Gastrocnemius medialis (tissue), 4 donors: ENCODE measurements at regions of chr12 and their contacts with region 1.

Region 1: GRCh38 chr12:54279866-54280467 is at the start of gene CBX5:
- DNase-seq: peak; percentile 99
- ATAC-seq: peak; percentile 72 to 77
- H3K4me3 ChIP-seq: peak within 1 kb of the TSS; percentile 74 to 95 (median 81)
- H3K27ac ChIP-seq: peak within 1 kb of the TSS; percentile 93 to 98 (median 96)
- H3K4me1 ChIP-seq: peaks cover 51 to 53% of the 10 kb centered on the region in 2 donors
- H3K27me3 ChIP-seq: no peaks in the 10 kb centered on the region
- CTCF ChIP-seq: no peak
- POLR2A ChIP-seq: peak; percentile 13 to 38
- total RNA-seq, gene CBX5: 7.9 to 8.9 (median 8.1) TPM

Region 2: GRCh38 chr12:53984901-53985709 is 294.9 kb before region 1 on chr12 and contains the start of gene HOXC10:
- in situ Hi-C with region 1: no loop called
- intact Hi-C with region 1: loop called (anchors 5 kb)
- DNase-seq: peak; percentile 97
- ATAC-seq: peak; percentile 81 to 85
- H3K4me3 ChIP-seq: peak within 1 kb of the TSS; percentile 68 to 85 (median 82)
- H3K27ac ChIP-seq: peak within 1 kb of the TSS; percentile 94 to 100 (median 98)
- H3K4me1 ChIP-seq: peaks cover 32 to 41% of the 10 kb centered on the region in 2 donors
- H3K27me3 ChIP-seq: peaks cover 0 to 38% (median 0%) of the 10 kb centered on the region in 3 donors
- CTCF ChIP-seq: peak; percentile 64 to 92 (median 82)
- POLR2A ChIP-seq: peak; percentile 45 to 49
- total RNA-seq, gene HOXC10: 23.9 to 48.3 (median 40.3) TPM

Region 3: GRCh38 chr12:54214553-54215406 is 65.2 kb before region 1 on chr12:
- in situ Hi-C with region 1: no loop called
- intact Hi-C with region 1: loop called (anchors 5 kb)
- DNase-seq: peak; percentile 80 to 86
- ATAC-seq: peak; percentile 89 to 94
- H3K4me3 ChIP-seq: peak overlapping the region; percentile 35 to 48 (median 42)
- H3K27ac ChIP-seq: no peak overlapping the region
- H3K4me1 ChIP-seq: peaks cover 15% of the 10 kb centered on the region in 2 donors
- H3K27me3 ChIP-seq: peaks cover 0 to 4% (median 3%) of the 10 kb centered on the region in 3 donors
- CTCF ChIP-seq: peak; percentile 96 to 100 (median 97)
- POLR2A ChIP-seq: no peak

Region 4: DNA sequence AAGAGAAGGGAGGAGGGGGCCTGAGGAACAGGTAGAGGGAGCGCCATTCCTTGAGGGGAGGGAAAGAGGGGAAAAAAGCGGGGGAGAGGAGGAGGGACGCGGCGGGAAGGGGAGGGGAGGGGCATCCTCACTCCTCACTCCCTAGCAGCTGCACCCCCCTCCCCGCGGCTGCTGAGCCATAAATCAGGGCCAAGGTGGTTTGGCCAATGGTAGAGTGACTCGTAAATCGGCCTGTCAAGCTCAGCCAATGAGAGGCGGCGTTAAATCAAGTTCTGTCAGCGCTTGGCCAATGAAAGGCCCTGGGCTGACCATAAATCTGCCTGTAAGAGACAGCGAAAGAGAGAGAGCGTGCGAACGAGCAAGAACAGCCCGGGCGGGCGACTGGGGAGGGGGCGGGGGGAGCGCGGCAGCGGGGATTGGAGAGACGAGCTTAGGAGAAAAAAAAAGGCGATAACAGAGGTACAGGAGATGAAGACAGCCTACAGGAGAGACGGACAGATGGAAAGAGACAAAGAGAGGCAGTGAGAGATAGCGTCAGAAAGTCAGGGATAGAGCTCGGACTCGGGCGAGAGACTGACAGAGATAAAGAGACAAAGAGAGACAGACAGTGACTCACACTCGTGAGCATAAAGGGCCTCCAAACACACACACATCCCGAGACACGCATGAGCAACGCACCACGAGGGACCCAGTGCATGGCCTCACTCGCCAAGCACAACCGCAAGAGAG is 79.2 kb after region 1 on chr12:
- in situ Hi-C with region 1: no loop called
- intact Hi-C with region 1: loop called (anchors 2 kb)
- DNase-seq: peak; percentile 98 to 99
- ATAC-seq: peak; percentile 97 to 98
- H3K4me3 ChIP-seq: peak overlapping the region; percentile 69 to 86 (median 76)
- H3K27ac ChIP-seq: peak overlapping the region; percentile 88 to 94 (median 89)
- H3K4me1 ChIP-seq: peaks cover 12 to 18% of the 10 kb centered on the region in 2 donors
- H3K27me3 ChIP-seq: no peaks in the 10 kb centered on the region
- CTCF ChIP-seq: peak in 1 of 5 experiments; percentile 6
- POLR2A ChIP-seq: peak; percentile 52 to 72

Region 5: DNA sequence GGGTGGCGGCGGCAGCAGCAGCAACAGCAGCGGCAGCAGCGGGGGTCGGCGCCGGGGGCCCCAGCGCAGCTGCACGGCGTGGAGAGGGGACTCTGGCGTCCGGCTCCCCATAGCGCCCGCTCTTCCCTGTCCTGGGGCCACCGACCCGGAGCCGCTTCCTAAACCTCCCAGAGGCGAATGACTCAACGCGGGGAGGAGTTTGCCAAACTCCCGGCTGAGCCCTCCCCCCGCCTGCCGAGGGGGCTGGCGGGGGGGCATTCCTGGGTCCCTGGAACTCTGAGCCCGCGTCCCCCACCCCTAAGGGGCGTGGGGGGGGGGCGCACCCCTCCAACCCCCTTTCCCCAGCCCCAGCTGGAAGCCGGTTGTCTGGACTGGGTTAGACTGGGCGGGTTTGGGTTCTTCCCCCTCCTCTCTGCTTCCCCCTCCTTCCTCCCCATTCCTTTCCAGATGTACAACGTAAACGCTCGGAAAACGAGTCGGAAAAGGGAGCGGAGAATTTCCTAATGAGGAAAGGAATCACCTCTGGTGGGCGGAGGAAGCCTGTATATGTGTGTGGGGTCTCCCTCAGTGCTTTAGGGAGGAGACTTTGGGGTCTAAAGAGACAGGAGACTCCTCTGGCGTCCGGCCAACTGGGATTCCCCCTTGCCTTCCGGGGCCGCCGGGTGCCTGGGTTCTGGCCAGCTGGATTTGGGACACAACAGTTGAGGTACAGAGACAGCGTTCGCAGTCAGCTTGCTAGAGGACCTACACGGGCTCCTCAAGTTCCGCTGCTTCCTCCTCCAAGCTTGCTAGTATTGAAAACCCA is 139.3 kb after region 1 on chr12 and contains the start of gene ITGA5:
- in situ Hi-C with region 1: no loop called
- intact Hi-C with region 1: no loop called
- DNase-seq: peak; percentile 70 to 76
- ATAC-seq: peak; percentile 70 to 76
- H3K4me3 ChIP-seq: peak within 1 kb of the TSS; percentile 81 to 99 (median 92)
- H3K27ac ChIP-seq: peak within 1 kb of the TSS; percentile 79 to 97 (median 88)
- H3K4me1 ChIP-seq: peaks cover 20 to 38% of the 10 kb centered on the region in 2 donors
- H3K27me3 ChIP-seq: peaks cover 0 to 5% (median 0%) of the 10 kb centered on the region in 3 donors
- CTCF ChIP-seq: no peak
- POLR2A ChIP-seq: peak; percentile 74 to 86
- total RNA-seq, gene ITGA5: 26.5 to 34.1 (median 30.9) TPM

Region 6: GRCh38 chr12:55707841-55708694 is 1428.1 kb after region 1 on chr12 and contains the start of gene ITGA7:
- in situ Hi-C with region 1: no loop called
- intact Hi-C with region 1: loop called (anchors 10 kb)
- DNase-seq: peak; percentile 64 to 78
- ATAC-seq: peak in 1 of 2 donors; percentile 8
- H3K4me3 ChIP-seq: peak within 1 kb of the TSS; percentile 59 to 79 (median 68)
- H3K27ac ChIP-seq: peak within 1 kb of the TSS; percentile 87 to 96 (median 92)
- H3K4me1 ChIP-seq: peaks cover 73 to 83% of the 10 kb centered on the region in 2 donors
- H3K27me3 ChIP-seq: no peaks in the 10 kb centered on the region
- CTCF ChIP-seq: no peak
- POLR2A ChIP-seq: peak; percentile 32 to 40
- total RNA-seq, gene ITGA7: 69.7 to 206 (median 92.0) TPM